Endothelial cell of umbilical vein (primary cell): ENCODE measurements at regions of chr9 and their contacts with region 1.

Region 1: DNA sequence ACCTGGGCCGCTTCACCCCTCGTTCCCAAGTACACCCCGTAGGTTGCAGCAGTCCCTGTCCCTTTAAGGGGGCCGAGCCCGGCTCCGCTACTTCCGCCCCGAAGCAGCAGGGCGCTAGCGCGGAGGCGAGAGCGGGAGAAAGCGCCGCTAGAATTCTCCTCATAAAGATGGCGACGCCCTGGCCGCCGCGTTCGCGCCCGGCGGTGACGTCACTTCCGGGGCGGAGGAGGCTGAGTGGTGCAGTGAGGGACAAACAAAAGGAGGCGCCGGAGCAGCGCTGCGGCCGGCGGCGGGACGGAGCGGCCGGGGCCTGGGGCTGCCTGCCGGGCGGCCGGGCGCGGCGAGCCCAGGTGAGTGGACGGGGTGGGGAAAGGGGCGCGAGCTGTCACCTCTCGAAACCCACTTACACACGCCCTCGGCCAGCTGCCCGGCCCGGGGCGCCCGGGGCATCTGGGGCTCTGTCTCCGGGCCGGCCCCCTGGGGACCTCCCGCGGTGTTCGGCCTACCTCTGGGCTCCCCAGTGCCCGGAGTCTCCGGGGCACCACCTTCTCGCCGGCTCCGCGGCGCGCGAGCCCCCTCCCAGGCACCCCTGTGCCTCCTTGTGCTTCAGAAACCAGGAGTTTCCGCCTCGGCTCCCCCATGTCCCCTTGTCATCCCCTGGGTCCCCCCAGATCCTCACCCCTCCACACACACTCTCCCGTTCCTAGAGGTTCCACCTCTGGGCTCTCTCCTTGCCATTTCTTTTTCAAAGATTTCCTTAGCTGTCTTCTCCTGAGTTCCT is at the starts of genes KYAT1 and LRRC8A:
- DNase-seq: peak; percentile 96
- H3K4me3 ChIP-seq: peak within 1 kb of the TSS; percentile 83 to 91 (median 90)
- H3K27ac ChIP-seq: peak within 1 kb of the TSS; percentile 77
- H3K4me1 ChIP-seq: peaks cover 41% of the 10 kb centered on the region
- H3K27me3 ChIP-seq: no peaks in the 10 kb centered on the region
- CTCF ChIP-seq: no peak
- POLR2A ChIP-seq: peak; percentile 98
- total RNA-seq, gene KYAT1: 7.2 and 8.0 TPM in 2 replicates
- total RNA-seq, gene LRRC8A: 99.6 and 126 TPM in 2 replicates

Region 2: GRCh38 chr9:128863647-128864046 is 18.4 kb before region 1 on chr9:
- CTCF ChIA-PET with region 1: interaction called, 28 read pairs
- POLR2A ChIA-PET with region 1: interaction called, 6 read pairs
- dilution Hi-C with region 1: no loop called
- intact Hi-C with region 1: loop called (anchors 1 kb)
- DNase-seq: peak; percentile 69
- H3K4me3 ChIP-seq: no peak overlapping the region
- H3K27ac ChIP-seq: no peak overlapping the region
- H3K4me1 ChIP-seq: no peaks in the 10 kb centered on the region
- H3K27me3 ChIP-seq: no peaks in the 10 kb centered on the region
- CTCF ChIP-seq: peak; percentile 73 to 97
- POLR2A ChIP-seq: no peak

Region 3: GRCh38 chr9:128911529-128912035 is 29.5 kb after region 1 on chr9:
- CTCF ChIA-PET with region 1: interaction called, 4 read pairs
- POLR2A ChIA-PET with region 1: interaction called, 6 read pairs
- dilution Hi-C with region 1: no loop called
- intact Hi-C with region 1: loop called (anchors 1 kb)
- DNase-seq: peak; percentile 85
- H3K4me3 ChIP-seq: no peak overlapping the region
- H3K27ac ChIP-seq: peak overlapping the region; percentile 94
- H3K4me1 ChIP-seq: peaks cover 58% of the 10 kb centered on the region
- H3K27me3 ChIP-seq: no peaks in the 10 kb centered on the region
- CTCF ChIP-seq: no peak
- POLR2A ChIP-seq: no peak

Region 4: GRCh38 chr9:128947422-128948301 is 65.6 kb after region 1 on chr9 and contains the starts of genes DOLK and NUP188:
- CTCF ChIA-PET with region 1: no interaction called
- POLR2A ChIA-PET with region 1: interaction called, 12 read pairs
- dilution Hi-C with region 1: no loop called
- intact Hi-C with region 1: loop called (anchors 5 kb)
- DNase-seq: peak; percentile 93
- H3K4me3 ChIP-seq: peak within 1 kb of the TSS; percentile 78 to 89 (median 88)
- H3K27ac ChIP-seq: peak within 1 kb of the TSS; percentile 70
- H3K4me1 ChIP-seq: peaks cover 4% of the 10 kb centered on the region
- H3K27me3 ChIP-seq: no peaks in the 10 kb centered on the region
- CTCF ChIP-seq: no peak
- POLR2A ChIP-seq: peak; percentile 87
- total RNA-seq, gene DOLK: 18.8 and 22.3 TPM in 2 replicates
- total RNA-seq, gene NUP188: 62.1 and 66.2 TPM in 2 replicates